Activated CD8-positive, alpha-beta T cell treated with anti-CD3 and anti-CD28 coated beads, Interleukin-2, amount 10 ng/mL, durations not matched to agents 7 days and 5 days (primary cell): ENCODE measurements at regions of chr6 and their contacts with region 1.

Region 1: GRCh38 chr6:25866011-25866410 is 8.0 kb downstream of the SLC17A3 start:
- DNase-seq: peak; percentile 47
- ATAC-seq: peak; percentile 91
- H3K4me3 Mint-ChIP-seq: peak overlapping the region; percentile 23
- H3K27ac Mint-ChIP-seq: peak overlapping the region; percentile 68
- H3K4me1 Mint-ChIP-seq: peaks cover 20% of the 10 kb centered on the region
- H3K27me3 Mint-ChIP-seq: peaks cover 2% of the 10 kb centered on the region

Region 2: DNA sequence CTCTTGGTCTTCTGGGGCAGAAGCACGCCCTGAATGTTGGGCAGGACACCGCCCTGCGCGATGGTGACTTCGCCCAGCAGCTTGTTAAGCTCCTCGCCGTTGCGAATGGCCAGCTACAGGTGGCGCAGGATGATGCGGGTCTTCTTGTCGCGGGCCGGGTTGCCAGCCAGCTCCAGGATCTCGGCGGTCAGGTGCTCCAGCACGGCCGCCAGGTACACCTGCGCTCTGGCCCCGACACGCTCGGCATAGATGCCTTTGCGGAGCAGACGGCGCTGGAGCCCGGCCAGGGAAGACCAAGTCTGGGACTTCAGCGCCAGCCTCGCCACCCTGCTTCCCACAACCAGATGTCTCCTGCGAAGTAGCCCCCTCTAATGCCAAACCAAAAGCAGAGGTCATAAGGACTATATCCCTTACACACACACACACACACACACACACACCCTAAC is 16.1 kb after region 1 on chr6:
- CTCF ChIA-PET with region 1: interaction called, 15 read pairs
- POLR2A ChIA-PET with region 1: no interaction called
- DNase-seq: peak; percentile 60
- ATAC-seq: peak; percentile 85
- H3K4me3 Mint-ChIP-seq: peak overlapping the region; percentile 85
- H3K27ac Mint-ChIP-seq: peak overlapping the region; percentile 78
- H3K4me1 Mint-ChIP-seq: peaks cover 9% of the 10 kb centered on the region
- H3K27me3 Mint-ChIP-seq: peaks cover 15% of the 10 kb centered on the region